ENCODE measurements at regions of chr7 and their contacts with region 1.

Region 1: DNA sequence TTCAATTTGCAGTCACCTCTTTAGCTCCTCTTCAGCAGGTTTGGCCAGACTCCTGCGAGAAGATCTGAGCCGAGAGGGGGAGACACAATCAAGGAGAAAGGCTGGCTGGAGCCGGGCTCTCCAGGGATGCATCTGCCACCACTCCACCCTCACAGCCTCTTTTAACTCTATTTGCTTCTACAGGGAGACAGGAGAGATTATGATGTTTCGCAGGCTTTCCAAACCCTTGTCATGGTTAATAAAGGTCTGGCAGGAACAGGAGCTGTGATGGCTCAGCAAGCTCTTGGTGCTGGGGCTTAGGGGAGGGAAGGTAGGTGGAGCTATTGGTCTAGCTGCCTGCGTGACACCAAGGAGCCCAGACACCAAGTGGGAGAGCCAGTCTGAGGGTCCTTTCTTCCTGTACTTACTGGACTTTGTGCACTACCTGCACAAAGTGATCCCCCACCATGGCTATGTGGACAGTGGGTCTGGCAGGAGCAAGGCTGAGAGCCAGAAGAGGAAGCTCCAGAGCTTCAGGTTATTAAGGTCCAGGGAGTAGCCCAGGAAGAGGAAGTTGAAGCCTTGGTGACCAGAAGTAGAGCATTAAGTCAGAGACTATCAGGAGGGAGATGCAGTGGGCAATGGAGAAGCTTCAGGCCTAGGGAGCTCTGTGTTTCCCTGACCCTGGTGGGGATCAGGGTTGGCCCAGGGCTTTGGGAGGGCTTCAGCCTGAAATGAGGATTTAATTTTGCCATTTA is 448.3 kb upstream of the PODXL start:
- DNase-seq: peak; percentile 25 to 30
- ATAC-seq: peak in 7 of 8 donors; percentile 75 to 89 (median 86)
- H3K4me3 ChIP-seq: no peak overlapping the region
- H3K27ac ChIP-seq: no peak overlapping the region
- H3K4me1 ChIP-seq: peaks cover 0 to 6% (median 0%) of the 10 kb centered on the region in 9 donors
- H3K27me3 ChIP-seq: peaks cover 0 to 3% (median 0%) of the 10 kb centered on the region in 7 donors
- CTCF ChIP-seq: peak in 8 of 9 donors; percentile 9 to 63 (median 49)

Region 2: DNA sequence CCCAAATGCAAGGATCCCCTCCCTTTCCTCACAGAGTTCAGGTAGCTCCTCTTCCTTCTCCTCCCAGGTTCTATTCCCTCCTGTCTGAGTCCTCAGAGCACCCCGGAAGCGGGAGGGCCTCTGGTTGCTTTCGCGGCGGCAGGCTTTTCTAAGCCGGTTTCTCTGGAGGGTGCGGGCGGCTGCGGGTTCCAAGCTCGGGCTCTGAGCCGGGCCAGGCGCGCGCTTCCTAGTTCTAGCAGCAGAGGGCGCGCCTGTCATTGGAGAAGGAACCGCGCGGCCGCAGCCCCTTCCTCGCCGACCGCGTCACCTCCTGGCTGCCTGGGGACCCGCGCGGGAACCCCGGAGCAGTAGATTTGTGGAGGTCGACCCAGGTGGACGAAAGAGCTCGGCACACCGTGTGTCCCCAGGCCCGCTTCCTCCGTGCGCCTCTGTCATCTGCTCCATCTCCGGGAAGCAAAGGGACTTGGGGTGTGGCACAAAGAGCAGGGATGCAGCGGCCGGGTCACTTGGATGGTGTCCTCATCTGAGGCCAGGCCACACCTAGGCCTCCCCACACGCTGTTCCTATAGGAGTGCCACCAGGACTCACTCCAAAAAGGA is 59.3 kb before region 1 on chr7:
- intact Hi-C with region 1: loop called in 1 of 10 experiments (anchors 10 kb)
- DNase-seq: peak; percentile 9 to 47
- ATAC-seq: peak; percentile 41 to 82 (median 65)
- H3K4me3 ChIP-seq: peak overlapping the region in 6 of 10 donors; percentile 25 to 40 (median 30)
- H3K27ac ChIP-seq: no peak overlapping the region
- H3K4me1 ChIP-seq: peaks cover 0 to 18% (median 8%) of the 10 kb centered on the region in 9 donors
- H3K27me3 ChIP-seq: peaks cover 0 to 65% (median 41%) of the 10 kb centered on the region in 7 donors
- CTCF ChIP-seq: peak; percentile 65 to 91 (median 89)

Region 3: GRCh38 chr7:132145466-132145865 is 140.8 kb after region 1 on chr7:
- intact Hi-C with region 1: loop called in 3 of 10 experiments (anchors 10 kb)
- DNase-seq: peak in 1 of 2 donors; percentile 20
- ATAC-seq: peak; percentile 42 to 93 (median 71)
- H3K4me3 ChIP-seq: no peak overlapping the region
- H3K27ac ChIP-seq: no peak overlapping the region
- H3K4me1 ChIP-seq: peaks cover 0 to 16% (median 9%) of the 10 kb centered on the region in 9 donors
- H3K27me3 ChIP-seq: no peaks in the 10 kb centered on the region
- CTCF ChIP-seq: peak in 1 of 9 donors; percentile 18

Region 4: DNA sequence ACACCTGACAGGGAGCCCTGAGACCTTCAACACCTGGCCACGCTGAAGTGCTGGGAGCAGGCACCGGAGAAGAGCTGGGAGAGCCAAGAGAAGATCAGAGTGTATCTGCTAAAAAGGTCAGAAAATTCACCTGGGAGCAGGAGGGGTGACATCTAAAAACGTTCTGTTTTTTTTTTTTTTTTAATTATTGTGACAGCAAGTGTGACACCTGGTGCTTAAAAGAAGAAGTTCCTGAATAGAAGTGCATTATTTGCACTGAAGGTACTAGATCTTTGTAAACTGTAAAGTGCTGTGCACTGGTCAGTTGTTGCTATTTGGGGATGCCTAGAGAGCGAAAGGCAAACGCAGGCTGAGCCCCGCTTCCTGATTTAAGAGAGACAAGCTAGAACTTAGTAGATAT is 149.5 kb after region 1 on chr7:
- intact Hi-C with region 1: loop called in 3 of 10 experiments (anchors 10 kb)
- DNase-seq: no peak
- ATAC-seq: no peak
- H3K4me3 ChIP-seq: no peak overlapping the region
- H3K27ac ChIP-seq: no peak overlapping the region
- H3K4me1 ChIP-seq: no peaks in the 10 kb centered on the region
- H3K27me3 ChIP-seq: no peaks in the 10 kb centered on the region
- CTCF ChIP-seq: peak in 1 of 9 donors; percentile 14

Region 5: GRCh38 chr7:132250883-132251653 is 246.4 kb after region 1 on chr7:
- intact Hi-C with region 1: loop called in 7 of 10 experiments (anchors 2 to 10 kb)
- DNase-seq: peak; percentile 63 to 79
- ATAC-seq: peak; percentile 40 to 88 (median 83)
- H3K4me3 ChIP-seq: no peak overlapping the region
- H3K27ac ChIP-seq: no peak overlapping the region
- H3K4me1 ChIP-seq: peaks cover 1 to 54% (median 33%) of the 10 kb centered on the region in 9 donors
- H3K27me3 ChIP-seq: no peaks in the 10 kb centered on the region
- CTCF ChIP-seq: no peak

Measured in heart right ventricle (tissue), 16 donors.